ENCODE measurements at regions of chr1 and their contacts with region 1.

Region 1: GRCh38 chr1:236759252-236759859 is 35.7 kb upstream of the MTR start:
- DNase-seq: peak; percentile 81
- H3K4me3 Mint-ChIP-seq: no peak overlapping the region
- H3K27ac Mint-ChIP-seq: no peak overlapping the region
- H3K4me1 Mint-ChIP-seq: no peaks in the 10 kb centered on the region
- H3K27me3 Mint-ChIP-seq: no peaks in the 10 kb centered on the region
- CTCF ChIP-seq: peak; percentile 90

Region 2: DNA sequence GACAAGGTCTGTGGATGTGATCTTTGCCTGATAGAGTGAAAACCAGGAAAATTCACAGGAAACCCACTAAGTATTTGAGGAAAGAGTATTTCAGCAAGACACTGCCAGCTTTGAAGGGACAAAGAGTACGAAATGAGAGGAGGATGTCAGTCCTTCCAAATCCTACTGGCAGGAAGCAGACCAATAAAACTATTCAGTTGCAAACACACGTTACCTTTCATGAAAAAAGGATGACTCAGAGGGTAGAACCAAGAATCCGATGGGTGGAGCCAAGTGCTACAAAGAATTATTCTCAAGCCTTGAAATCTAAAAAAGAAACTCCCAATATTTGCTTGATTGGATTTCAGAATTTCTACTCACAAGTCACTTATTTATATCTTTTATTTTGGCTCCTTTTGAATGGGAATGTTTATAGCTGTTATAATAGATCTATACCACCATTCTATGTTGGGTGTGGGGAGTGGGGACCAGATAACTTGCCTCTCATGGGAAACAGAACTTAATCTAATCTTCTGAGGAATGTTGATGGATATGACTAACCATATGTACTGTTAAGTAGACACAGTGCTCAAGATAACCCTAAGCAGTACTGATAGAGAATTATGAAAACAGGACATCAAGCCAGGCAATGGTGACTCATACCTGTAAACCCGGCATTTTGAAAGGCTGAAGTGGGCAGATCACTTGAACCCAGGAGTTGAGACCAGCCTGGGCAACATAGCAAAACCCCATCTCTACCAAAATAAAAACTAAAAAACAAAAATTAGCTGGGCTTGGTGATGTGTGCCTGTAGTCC is 135.8 kb before region 1 on chr1:
- CTCF ChIA-PET with region 1: interaction called, 22 read pairs
- POLR2A ChIA-PET with region 1: no interaction called
- intact Hi-C with region 1: no loop called
- DNase-seq: peak; percentile 34
- H3K4me3 Mint-ChIP-seq: no peak overlapping the region
- H3K27ac Mint-ChIP-seq: no peak overlapping the region
- H3K4me1 Mint-ChIP-seq: no peaks in the 10 kb centered on the region
- H3K27me3 Mint-ChIP-seq: peaks cover 3% of the 10 kb centered on the region
- CTCF ChIP-seq: no peak

Region 3: GRCh38 chr1:236734141-236734765 is 25.1 kb before region 1 on chr1:
- CTCF ChIA-PET with region 1: interaction called, 14 read pairs
- POLR2A ChIA-PET with region 1: no interaction called
- intact Hi-C with region 1: no loop called
- DNase-seq: peak; percentile 63
- H3K4me3 Mint-ChIP-seq: no peak overlapping the region
- H3K27ac Mint-ChIP-seq: no peak overlapping the region
- H3K4me1 Mint-ChIP-seq: peaks cover 7% of the 10 kb centered on the region
- H3K27me3 Mint-ChIP-seq: no peaks in the 10 kb centered on the region
- CTCF ChIP-seq: no peak

Region 4: GRCh38 chr1:236774926-236775325 is 15.6 kb after region 1 on chr1:
- CTCF ChIA-PET with region 1: interaction called, 30 read pairs
- POLR2A ChIA-PET with region 1: interaction called, 3 read pairs
- intact Hi-C with region 1: no loop called
- DNase-seq: peak; percentile 60
- H3K4me3 Mint-ChIP-seq: no peak overlapping the region
- H3K27ac Mint-ChIP-seq: no peak overlapping the region
- H3K4me1 Mint-ChIP-seq: no peaks in the 10 kb centered on the region
- H3K27me3 Mint-ChIP-seq: peaks cover 17% of the 10 kb centered on the region
- CTCF ChIP-seq: peak; percentile 19

Region 5: GRCh38 chr1:236795035-236795756 is 35.8 kb after region 1 on chr1 and contains the start of gene MTR:
- CTCF ChIA-PET with region 1: interaction called, 37 read pairs
- POLR2A ChIA-PET with region 1: interaction called, 9 read pairs
- intact Hi-C with region 1: no loop called
- DNase-seq: peak; percentile 100
- H3K4me3 Mint-ChIP-seq: peak within 1 kb of the TSS; percentile 93
- H3K27ac Mint-ChIP-seq: peak within 1 kb of the TSS; percentile 88
- H3K4me1 Mint-ChIP-seq: peaks cover 34% of the 10 kb centered on the region
- H3K27me3 Mint-ChIP-seq: peaks cover 15% of the 10 kb centered on the region
- CTCF ChIP-seq: no peak
- total RNA-seq, gene MTR: 54.6 and 59.1 TPM in 2 replicates

Region 6: GRCh38 chr1:237124856-237125462 is 365.6 kb after region 1 on chr1:
- CTCF ChIA-PET with region 1: no interaction called
- POLR2A ChIA-PET with region 1: no interaction called
- intact Hi-C with region 1: loop called (anchors 5 kb)
- DNase-seq: peak; percentile 65
- H3K4me3 Mint-ChIP-seq: no peak overlapping the region
- H3K27ac Mint-ChIP-seq: no peak overlapping the region
- H3K4me1 Mint-ChIP-seq: no peaks in the 10 kb centered on the region
- H3K27me3 Mint-ChIP-seq: peaks cover 13% of the 10 kb centered on the region
- CTCF ChIP-seq: peak; percentile 80

Region 7: DNA sequence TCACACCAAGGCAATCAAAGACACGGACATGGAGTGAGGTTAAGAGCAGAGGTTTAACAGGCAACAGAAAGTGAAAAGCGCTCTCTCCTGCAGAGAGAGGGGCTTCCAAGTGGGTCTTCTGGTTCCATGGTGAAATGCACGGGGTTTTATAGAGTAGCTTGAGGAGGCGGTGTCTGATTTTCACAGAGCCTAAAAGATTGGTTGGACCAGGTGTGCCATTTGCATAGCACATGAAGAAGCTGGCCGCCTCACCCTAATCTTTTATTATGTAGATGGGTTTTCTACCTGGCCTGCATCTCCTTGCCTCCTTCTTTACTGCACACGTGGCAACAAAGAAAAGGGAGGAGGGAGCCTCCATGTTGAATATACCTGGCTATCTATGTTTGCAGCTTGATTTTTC is 479.9 kb after region 1 on chr1:
- CTCF ChIA-PET with region 1: no interaction called
- POLR2A ChIA-PET with region 1: no interaction called
- intact Hi-C with region 1: no loop called
- DNase-seq: no peak
- H3K4me3 Mint-ChIP-seq: no peak overlapping the region
- H3K27ac Mint-ChIP-seq: no peak overlapping the region
- H3K4me1 Mint-ChIP-seq: no peaks in the 10 kb centered on the region
- H3K27me3 Mint-ChIP-seq: peaks cover 8% of the 10 kb centered on the region
- CTCF ChIP-seq: no peak

Measured in MCF 10A (cell line).